Common myeloid progenitor, CD34-positive (primary cell): ENCODE measurements at regions of chr21 and their contacts with region 1.

Region 1: GRCh38 chr21:43810505-43811261 is 21.3 kb downstream of the RRP1 start:
- DNase-seq: peak; percentile 70 to 82 (median 75)
- H3K4me3 ChIP-seq: peak overlapping the region in 2 of 7 experiments; percentile 19 to 48
- H3K27ac ChIP-seq: no peak overlapping the region
- H3K4me1 ChIP-seq: peaks cover 0 to 28% (median 19%) of the 10 kb centered on the region in 4 experiments
- H3K27me3 ChIP-seq: no peaks in the 10 kb centered on the region

Region 2: GRCh38 chr21:43797925-43798715 is 12.6 kb before region 1 on chr21:
- CTCF ChIA-PET with region 1: no interaction called
- POLR2A ChIA-PET with region 1: no interaction called
- DNase-seq: no peak
- H3K4me3 ChIP-seq: no peak overlapping the region
- H3K27ac ChIP-seq: no peak overlapping the region
- H3K4me1 ChIP-seq: no peaks in the 10 kb centered on the region
- H3K27me3 ChIP-seq: no peaks in the 10 kb centered on the region

Region 3: GRCh38 chr21:43829575-43830119 is 19.0 kb after region 1 on chr21:
- CTCF ChIA-PET with region 1: interaction called, 10 read pairs
- POLR2A ChIA-PET with region 1: no interaction called
- DNase-seq: peak in 2 of 3 donors; percentile 45 to 46
- H3K4me3 ChIP-seq: no peak overlapping the region
- H3K27ac ChIP-seq: no peak overlapping the region
- H3K4me1 ChIP-seq: peaks cover 0 to 15% (median 10%) of the 10 kb centered on the region in 4 experiments
- H3K27me3 ChIP-seq: peaks cover 0 to 15% (median 2%) of the 10 kb centered on the region in 5 experiments

Region 4: DNA sequence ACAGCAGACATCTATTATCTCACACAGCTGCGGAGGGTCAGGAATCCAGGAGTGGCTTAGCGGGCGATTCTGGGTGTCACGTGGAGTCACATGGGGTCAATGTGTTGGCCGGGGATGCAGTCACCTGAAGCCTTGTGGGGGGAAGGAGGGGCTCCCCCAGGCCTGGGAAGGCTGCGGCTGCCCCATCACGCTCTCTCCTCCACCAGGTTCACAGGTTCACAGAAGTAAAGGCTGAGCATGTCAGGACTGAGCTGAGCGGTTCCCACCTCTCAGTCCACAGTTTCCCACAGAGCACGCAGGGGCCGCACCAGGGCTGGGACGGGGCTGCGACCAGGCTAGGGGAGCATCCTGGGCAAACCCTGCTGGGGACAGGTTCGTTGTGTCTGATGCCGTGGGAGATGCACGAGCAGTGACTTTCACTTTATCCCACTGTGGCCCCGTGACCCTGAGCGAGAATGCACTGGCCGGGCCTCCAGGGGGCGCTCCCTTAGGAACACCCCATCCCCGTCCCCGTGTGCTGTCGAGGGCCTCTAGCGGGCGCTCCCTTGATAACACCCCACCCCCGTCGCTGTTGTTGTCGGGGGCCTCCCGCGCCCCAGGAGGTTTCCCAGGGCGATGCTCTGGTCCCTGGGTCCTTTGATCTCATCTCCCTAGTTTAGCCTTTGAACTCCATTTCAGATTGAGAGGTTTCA is 128.2 kb after region 1 on chr21:
- CTCF ChIA-PET with region 1: interaction called, 40 read pairs
- POLR2A ChIA-PET with region 1: no interaction called
- DNase-seq: peak; percentile 88 to 93 (median 93)
- H3K4me3 ChIP-seq: peak overlapping the region; percentile 29 to 83 (median 64)
- H3K27ac ChIP-seq: no peak overlapping the region
- H3K4me1 ChIP-seq: peaks cover 0 to 14% (median 10%) of the 10 kb centered on the region in 4 experiments
- H3K27me3 ChIP-seq: no peaks in the 10 kb centered on the region

Region 5: GRCh38 chr21:43975495-43975993 is 164.9 kb after region 1 on chr21:
- CTCF ChIA-PET with region 1: interaction called, 31 read pairs
- POLR2A ChIA-PET with region 1: no interaction called
- DNase-seq: peak; percentile 74 to 84 (median 83)
- H3K4me3 ChIP-seq: no peak overlapping the region
- H3K27ac ChIP-seq: no peak overlapping the region
- H3K4me1 ChIP-seq: peaks cover 0 to 3% (median 0%) of the 10 kb centered on the region in 4 experiments
- H3K27me3 ChIP-seq: no peaks in the 10 kb centered on the region